CD4-positive, alpha-beta T cell (primary cell): ENCODE measurements at regions of chr20 and their contacts with region 1.

Region 1: DNA sequence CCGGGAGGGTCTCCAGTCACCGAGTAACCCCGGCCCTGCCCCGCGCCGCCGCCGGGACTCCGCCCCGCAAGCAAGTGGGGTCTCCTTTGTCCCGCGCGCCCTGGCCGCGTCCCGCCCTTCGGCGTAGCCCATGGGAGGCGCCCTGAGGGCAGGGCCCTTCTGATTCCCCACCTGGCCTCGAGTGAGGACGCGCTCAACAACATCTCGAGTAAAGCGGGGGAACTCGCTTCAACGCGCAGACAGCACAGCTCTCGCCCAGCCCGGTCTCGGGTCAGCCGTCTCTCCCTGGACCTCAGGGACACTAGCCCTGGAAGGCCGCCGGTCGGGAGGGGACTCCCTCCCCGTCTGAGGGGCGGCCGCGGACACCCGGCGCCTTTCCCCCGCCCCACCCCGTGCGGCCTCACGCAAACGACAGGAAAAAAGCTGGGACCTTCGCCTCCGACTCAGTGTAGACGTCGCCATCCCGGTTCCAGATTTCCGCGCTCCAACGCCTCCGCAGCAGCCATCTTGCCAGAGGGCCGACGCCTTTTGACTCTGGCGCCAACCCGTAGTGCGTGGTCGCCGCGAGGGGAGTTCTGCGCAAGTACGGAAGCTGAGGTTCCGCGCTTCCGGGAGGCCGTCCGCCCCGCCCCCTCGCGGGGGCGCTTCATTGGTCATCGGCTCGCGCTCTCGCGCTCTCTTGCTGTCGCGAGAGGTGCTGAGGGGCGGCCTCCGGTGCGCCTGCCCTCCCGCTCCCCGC is 412 bp upstream of the GID8 start:
- DNase-seq: peak; percentile 94 to 98 (median 96)
- ATAC-seq: peak; percentile 88
- H3K4me3 ChIP-seq: peak overlapping the region; percentile 99
- H3K4me3 Mint-ChIP-seq: peak overlapping the region; percentile 96
- H3K27ac ChIP-seq: peak overlapping the region; percentile 84 to 87
- H3K27ac Mint-ChIP-seq: peak overlapping the region; percentile 92
- H3K4me1 ChIP-seq: peaks cover 64% of the 10 kb centered on the region
- H3K4me1 Mint-ChIP-seq: peaks cover 37% of the 10 kb centered on the region
- H3K27me3 ChIP-seq: no peaks in the 10 kb centered on the region
- H3K27me3 Mint-ChIP-seq: no peaks in the 10 kb centered on the region
- CTCF ChIP-seq: no peak

Region 2: DNA sequence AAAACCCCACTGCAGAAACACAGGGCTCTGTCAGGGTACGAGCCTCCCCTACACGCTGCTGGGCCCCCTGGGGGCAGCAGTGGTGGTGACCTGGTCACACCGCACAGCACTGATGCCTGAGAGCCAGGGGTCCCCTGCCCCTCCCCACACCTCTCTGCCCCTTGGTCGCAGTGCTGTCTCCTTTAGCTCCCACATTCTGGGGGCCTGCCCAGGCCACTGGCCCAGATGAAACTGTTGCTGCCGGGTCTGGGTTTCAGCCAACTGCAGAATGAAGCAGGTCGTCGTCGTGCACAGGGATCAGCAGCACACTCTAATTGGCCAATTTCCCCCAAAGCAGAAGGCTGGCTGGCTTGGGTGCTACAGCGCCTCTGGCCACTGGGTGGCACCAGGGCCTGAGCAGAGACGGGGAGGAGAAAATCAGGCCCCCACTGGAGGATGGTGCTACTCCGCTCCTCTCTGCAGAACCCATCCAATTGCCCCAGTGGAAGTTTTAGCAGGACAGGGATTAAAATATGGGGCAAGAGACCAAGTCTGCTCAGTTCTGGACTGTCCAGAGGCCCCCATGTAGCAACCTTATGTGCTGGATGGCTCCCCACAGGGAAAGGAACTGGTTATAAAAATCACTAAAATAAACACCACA is 37.4 kb before region 1 on chr20:
- CTCF ChIA-PET with region 1: interaction called, 3 read pairs
- POLR2A ChIA-PET with region 1: interaction called, 6 read pairs
- intact Hi-C with region 1: loop called (anchors 5 kb)
- DNase-seq: peak; percentile 63 to 89 (median 76)
- ATAC-seq: peak; percentile 89
- H3K4me3 ChIP-seq: no peak overlapping the region
- H3K4me3 Mint-ChIP-seq: peak overlapping the region; percentile 71
- H3K27ac ChIP-seq: peak overlapping the region; percentile 8 to 47
- H3K27ac Mint-ChIP-seq: peak overlapping the region; percentile 92
- H3K4me1 ChIP-seq: peaks cover 29% of the 10 kb centered on the region
- H3K4me1 Mint-ChIP-seq: peaks cover 40% of the 10 kb centered on the region
- H3K27me3 ChIP-seq: no peaks in the 10 kb centered on the region
- H3K27me3 Mint-ChIP-seq: no peaks in the 10 kb centered on the region
- CTCF ChIP-seq: peak; percentile 96

Region 3: DNA sequence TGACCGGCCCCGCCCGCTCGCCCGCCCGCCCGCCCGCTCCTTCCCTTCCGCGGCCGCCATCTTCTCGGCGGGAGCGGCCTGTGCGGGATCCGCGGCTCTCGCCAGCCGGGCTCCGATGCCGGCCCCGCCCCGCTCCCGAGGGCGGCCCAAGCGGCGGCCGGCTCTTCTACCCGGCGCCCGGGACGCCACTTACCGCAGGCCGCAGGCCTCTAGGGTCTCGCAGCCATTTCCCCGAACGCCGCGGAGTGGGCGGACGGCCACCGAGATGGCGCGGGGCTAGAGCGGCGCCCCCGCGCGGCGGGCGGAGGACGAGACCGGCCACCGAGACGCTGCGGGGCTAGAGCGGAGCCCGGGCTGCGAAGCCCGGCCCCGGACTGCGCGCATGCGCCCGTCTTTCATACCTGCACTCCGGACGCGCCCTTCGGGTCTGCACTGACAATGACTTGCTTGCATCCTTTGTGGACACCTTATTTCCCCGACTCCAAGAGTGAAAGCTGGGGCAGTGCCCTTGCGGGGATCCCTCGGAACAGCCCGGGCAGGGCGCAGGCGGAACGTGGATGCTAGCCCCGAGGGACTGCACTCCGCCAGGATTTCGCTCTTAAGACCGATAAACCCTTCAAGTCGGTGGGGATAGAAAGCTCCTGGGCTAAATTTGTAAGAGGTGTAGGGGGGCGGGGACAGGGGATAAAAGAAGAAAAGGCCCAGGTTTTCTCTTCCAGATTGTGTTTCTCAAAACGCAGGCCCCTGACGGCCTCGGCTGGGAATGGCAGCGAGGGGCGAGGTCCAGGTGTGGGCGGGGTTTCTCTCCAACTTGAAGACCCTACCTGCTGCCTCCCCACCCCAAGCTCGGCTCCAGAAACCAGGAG is 11.1 kb before region 1 on chr20 and contains the start of gene DIDO1:
- CTCF ChIA-PET with region 1: interaction called, 11 read pairs
- POLR2A ChIA-PET with region 1: interaction called, 69 read pairs
- intact Hi-C with region 1: loop called (anchors 1 kb)
- DNase-seq: peak; percentile 78 to 96 (median 90)
- ATAC-seq: peak; percentile 74
- H3K4me3 ChIP-seq: peak within 1 kb of the TSS; percentile 99
- H3K4me3 Mint-ChIP-seq: peak within 1 kb of the TSS; percentile 98
- H3K27ac ChIP-seq: peak within 1 kb of the TSS; percentile 86 to 89
- H3K27ac Mint-ChIP-seq: peak within 1 kb of the TSS; percentile 89
- H3K4me1 ChIP-seq: peaks cover 72% of the 10 kb centered on the region
- H3K4me1 Mint-ChIP-seq: peaks cover 87% of the 10 kb centered on the region
- H3K27me3 ChIP-seq: no peaks in the 10 kb centered on the region
- H3K27me3 Mint-ChIP-seq: no peaks in the 10 kb centered on the region
- CTCF ChIP-seq: peak; percentile 64
- total RNA-seq, gene DIDO1: 51.9 to 54.3 TPM

Region 4: GRCh38 chr20:63216041-63216848 is 278.7 kb after region 1 on chr20 and contains the start of gene YTHDF1:
- CTCF ChIA-PET with region 1: no interaction called
- POLR2A ChIA-PET with region 1: no interaction called
- intact Hi-C with region 1: loop called in 1 of 2 experiments (anchors 10 kb)
- DNase-seq: peak; percentile 86 to 98 (median 94)
- ATAC-seq: peak; percentile 95
- H3K4me3 ChIP-seq: peak within 1 kb of the TSS; percentile 75
- H3K4me3 Mint-ChIP-seq: peak within 1 kb of the TSS; percentile 93
- H3K27ac ChIP-seq: peak within 1 kb of the TSS; percentile 44 to 70
- H3K27ac Mint-ChIP-seq: peak within 1 kb of the TSS; percentile 92
- H3K4me1 ChIP-seq: peaks cover 47% of the 10 kb centered on the region
- H3K4me1 Mint-ChIP-seq: peaks cover 48% of the 10 kb centered on the region
- H3K27me3 ChIP-seq: no peaks in the 10 kb centered on the region
- H3K27me3 Mint-ChIP-seq: no peaks in the 10 kb centered on the region
- CTCF ChIP-seq: no peak
- total RNA-seq, gene YTHDF1: 43.7 to 44.1 TPM

Region 5: DNA sequence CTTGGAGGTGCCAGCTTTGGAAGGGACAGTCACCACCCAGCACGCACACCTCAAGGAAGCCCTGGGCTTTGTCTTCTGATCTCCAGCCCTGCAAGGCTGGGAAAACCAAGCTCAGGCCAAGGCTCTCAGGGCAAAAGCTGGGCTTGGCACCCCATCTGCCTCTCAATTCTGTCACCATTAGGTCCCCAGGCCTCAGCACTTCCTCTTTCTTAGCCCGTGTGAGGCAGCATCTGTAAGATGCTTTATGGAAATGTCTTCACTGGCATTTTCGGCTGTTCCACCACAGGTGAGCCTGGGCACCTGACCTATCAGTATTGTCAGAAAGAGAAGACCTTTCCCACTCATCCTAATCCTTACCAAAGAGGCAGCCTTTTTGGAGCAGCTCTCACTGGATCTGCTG is 664.8 kb after region 1 on chr20:
- CTCF ChIA-PET with region 1: no interaction called
- POLR2A ChIA-PET with region 1: no interaction called
- intact Hi-C with region 1: no loop called
- DNase-seq: no peak
- ATAC-seq: no peak
- H3K4me3 ChIP-seq: no peak overlapping the region
- H3K4me3 Mint-ChIP-seq: no peak overlapping the region
- H3K27ac ChIP-seq: peak overlapping the region in 1 of 2 donors; percentile 30
- H3K27ac Mint-ChIP-seq: no peak overlapping the region
- H3K4me1 ChIP-seq: peaks cover 16% of the 10 kb centered on the region
- H3K4me1 Mint-ChIP-seq: no peaks in the 10 kb centered on the region
- H3K27me3 ChIP-seq: no peaks in the 10 kb centered on the region
- H3K27me3 Mint-ChIP-seq: no peaks in the 10 kb centered on the region
- CTCF ChIP-seq: no peak